AG04450 (cell line): ENCODE measurements at regions of chr16 and their contacts with region 1.

Region 1: GRCh38 chr16:58336332-58337089 is 41.7 kb upstream of the PRSS54 start:
- DNase-seq: peak; percentile 30
- H3K4me3 ChIP-seq: peak overlapping the region; percentile 38
- H3K27ac ChIP-seq: no peak overlapping the region
- H3K27me3 ChIP-seq: peaks cover under 1% of the 10 kb centered on the region
- CTCF ChIP-seq: peak; percentile 96

Region 2: DNA sequence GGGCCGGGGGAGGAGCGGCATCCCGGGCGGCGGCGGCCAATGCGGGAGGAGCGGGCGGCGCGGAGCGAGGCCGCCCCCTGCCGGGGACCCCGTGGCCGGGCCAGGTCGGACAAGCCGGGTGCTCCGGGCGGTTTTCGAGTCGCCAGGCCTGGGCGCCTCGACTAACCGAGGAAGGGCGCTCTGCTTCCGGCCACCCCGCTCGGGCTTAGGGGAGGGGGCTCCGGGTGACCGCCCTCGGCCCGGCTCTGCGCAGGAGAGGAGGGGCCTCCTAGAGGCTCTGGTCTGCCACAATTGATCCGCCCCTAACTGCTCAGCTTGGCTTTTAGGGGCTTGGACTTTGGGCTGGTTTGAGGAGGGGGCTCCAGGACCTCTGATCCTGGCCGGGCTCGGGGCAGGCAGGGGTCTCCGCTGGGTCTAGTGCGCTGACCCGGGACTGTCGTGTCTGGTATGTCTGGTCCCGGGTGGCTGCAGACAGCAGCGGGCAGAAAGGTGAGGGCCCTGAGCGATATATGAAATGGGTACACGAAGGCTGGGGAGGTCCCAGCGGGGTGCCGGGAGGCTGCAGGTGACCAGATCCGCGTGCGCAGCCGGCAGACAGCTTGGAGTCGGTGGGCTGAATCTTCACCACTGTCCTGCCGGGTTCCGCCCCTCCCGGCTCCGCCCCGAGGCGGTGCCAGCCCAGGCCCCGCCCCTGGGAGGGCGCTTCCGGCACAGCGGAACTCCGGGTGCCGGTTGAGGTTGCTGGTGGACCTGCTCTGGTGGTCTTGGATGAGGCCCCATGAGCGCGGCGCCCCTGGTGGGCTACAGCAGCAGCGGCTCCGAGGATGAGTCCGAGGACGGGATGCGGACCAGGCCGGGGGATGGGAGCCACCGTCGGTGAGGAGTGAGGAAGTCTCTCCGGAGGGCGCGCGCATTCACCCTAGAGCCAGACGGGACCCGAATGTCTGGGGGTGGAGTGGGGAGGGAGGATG is 335.5 kb before region 1 on chr16 and contains the start of gene USB1:
- CTCF ChIA-PET with region 1: no interaction called
- POLR2A ChIA-PET with region 1: no interaction called
- DNase-seq: peak; percentile 39
- H3K4me3 ChIP-seq: peak within 1 kb of the TSS; percentile 89
- H3K27ac ChIP-seq: peak within 1 kb of the TSS; percentile 47
- H3K27me3 ChIP-seq: no peaks in the 10 kb centered on the region
- CTCF ChIP-seq: peak; percentile 52
- polyA plus RNA-seq, gene USB1: 48.7 and 57.9 TPM in 2 replicates

Region 3: DNA sequence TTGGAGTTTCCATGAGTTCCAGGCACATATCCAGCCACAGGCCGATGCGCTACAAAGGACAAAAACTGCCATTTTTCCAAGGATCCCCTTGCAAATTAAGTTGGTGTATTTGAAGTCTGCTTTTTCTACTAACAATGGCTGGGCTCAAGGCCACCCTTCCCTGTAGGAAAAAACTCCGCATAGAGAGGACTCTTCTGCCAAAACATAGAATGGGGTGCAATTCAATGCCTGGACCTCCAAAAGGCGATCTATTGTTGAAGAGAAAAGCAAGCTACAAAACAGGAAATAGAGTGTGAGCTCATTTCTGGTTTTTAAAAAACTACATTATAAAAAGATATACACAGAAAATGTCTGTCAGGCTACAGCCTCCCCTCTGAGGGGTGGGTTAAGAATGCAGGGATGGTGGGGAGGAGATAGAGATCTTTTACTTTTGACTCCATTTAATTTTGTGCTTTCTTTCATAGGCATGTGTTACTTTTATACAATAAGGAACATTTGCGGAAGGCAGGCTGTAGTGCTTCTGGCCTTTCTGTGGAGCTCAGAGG is 18.8 kb before region 1 on chr16:
- CTCF ChIA-PET with region 1: interaction called, 18 read pairs
- POLR2A ChIA-PET with region 1: no interaction called
- DNase-seq: no peak
- H3K4me3 ChIP-seq: no peak overlapping the region
- H3K27ac ChIP-seq: no peak overlapping the region
- H3K27me3 ChIP-seq: no peaks in the 10 kb centered on the region
- CTCF ChIP-seq: no peak

Region 4: GRCh38 chr16:58392215-58393137 is 56.0 kb after region 1 on chr16 and contains the start of gene GINS3:
- CTCF ChIA-PET with region 1: interaction called, 22 read pairs
- POLR2A ChIA-PET with region 1: no interaction called
- DNase-seq: peak; percentile 68
- H3K4me3 ChIP-seq: peak within 1 kb of the TSS; percentile 75
- H3K27ac ChIP-seq: no peak within 1 kb of the TSS
- H3K27me3 ChIP-seq: peaks cover 7% of the 10 kb centered on the region
- CTCF ChIP-seq: no peak
- polyA plus RNA-seq, gene GINS3: 2.5 and 3.3 TPM in 2 replicates

Region 5: GRCh38 chr16:58456193-58456592 is 119.7 kb after region 1 on chr16:
- CTCF ChIA-PET with region 1: interaction called, 12 read pairs
- POLR2A ChIA-PET with region 1: no interaction called
- DNase-seq: no peak
- H3K4me3 ChIP-seq: no peak overlapping the region
- H3K27ac ChIP-seq: no peak overlapping the region
- H3K27me3 ChIP-seq: peaks cover 8% of the 10 kb centered on the region
- CTCF ChIP-seq: no peak

Region 6: DNA sequence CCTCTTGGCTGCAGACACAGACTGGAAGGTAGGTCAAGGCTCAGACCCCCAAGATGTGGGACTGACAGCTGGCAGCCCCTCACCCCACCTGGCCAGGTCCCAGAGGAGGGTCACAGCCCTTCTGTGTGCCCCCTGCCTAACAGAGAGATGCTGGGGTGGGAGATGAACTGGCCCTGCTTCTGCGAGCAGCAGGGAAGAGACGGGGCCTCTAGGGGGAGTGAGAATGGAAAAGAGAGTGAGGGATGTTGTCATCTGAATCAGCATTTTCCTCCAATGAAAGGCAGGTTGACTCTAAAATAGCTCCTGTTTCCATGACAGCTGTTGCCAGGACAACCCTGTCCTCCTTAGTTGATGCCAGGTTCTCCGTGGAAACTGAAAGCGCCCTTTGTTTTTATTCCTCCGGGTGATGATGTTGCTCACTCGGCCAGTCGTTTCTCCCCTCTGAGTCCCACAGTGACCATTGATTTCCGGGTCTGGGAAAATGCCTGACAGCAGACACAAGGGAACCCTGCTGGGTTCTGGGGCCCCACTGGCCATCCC is 158.5 kb after region 1 on chr16:
- CTCF ChIA-PET with region 1: interaction called, 73 read pairs
- POLR2A ChIA-PET with region 1: no interaction called
- DNase-seq: peak; percentile 93
- H3K4me3 ChIP-seq: peak overlapping the region; percentile 31
- H3K27ac ChIP-seq: peak overlapping the region; percentile 85
- H3K27me3 ChIP-seq: peaks cover 6% of the 10 kb centered on the region
- CTCF ChIP-seq: peak; percentile 76

Region 7: DNA sequence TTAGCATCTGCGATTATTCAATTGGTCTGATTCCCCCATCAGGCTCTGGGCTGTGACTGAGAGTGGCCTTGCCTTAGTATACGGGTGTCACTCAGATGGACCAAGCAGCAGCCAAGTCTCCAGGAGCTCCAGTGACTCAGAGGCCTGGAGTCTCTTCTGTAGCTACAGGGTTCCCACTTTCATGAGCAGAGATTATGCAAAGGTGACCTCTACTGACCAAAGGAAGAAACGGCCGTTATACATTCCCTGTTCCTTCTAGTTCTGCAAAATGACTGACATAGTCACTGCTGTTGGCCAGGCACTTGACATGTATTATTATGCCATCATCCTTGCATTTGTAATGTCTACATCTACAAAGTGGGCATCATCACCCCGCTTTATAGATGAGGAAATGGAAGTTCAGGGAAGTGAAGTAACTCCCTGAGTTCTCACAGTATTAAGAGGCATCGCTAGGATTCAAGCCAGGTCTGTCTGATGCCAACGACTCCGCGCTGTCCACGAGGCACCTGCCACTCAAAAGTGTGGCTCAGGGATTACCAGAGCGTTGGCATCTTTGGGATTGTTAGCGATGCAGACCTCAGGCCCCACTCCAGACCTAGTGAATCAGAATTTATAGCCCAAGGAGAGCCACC is 324.8 kb after region 1 on chr16:
- CTCF ChIA-PET with region 1: interaction called, 21 read pairs
- POLR2A ChIA-PET with region 1: no interaction called
- DNase-seq: peak; percentile 66
- H3K4me3 ChIP-seq: no peak overlapping the region
- H3K27ac ChIP-seq: no peak overlapping the region
- H3K27me3 ChIP-seq: no peaks in the 10 kb centered on the region
- CTCF ChIP-seq: peak; percentile 81